ENCODE measurements at regions of chr11 and their contacts with region 1.

Region 1: GRCh38 chr11:62787005-62787759 is at the start of gene TMEM179B:
- DNase-seq: peak; percentile 93 to 100 (median 97)
- ATAC-seq: peak; percentile 70 to 78 (median 74)
- H3K4me3 ChIP-seq: peak within 1 kb of the TSS; percentile 85 to 96
- H3K4me3 Mint-ChIP-seq: peak within 1 kb of the TSS; percentile 91 to 93 (median 91)
- H3K27ac ChIP-seq: peak within 1 kb of the TSS; percentile 77
- H3K27ac Mint-ChIP-seq: peak within 1 kb of the TSS; percentile 95 to 96
- H3K4me1 ChIP-seq: peaks cover 15 to 48% of the 10 kb centered on the region in 2 experiments
- H3K4me1 Mint-ChIP-seq: peaks cover 37 to 49% (median 46%) of the 10 kb centered on the region in 3 donors
- H3K27me3 ChIP-seq: no peaks in the 10 kb centered on the region
- H3K27me3 Mint-ChIP-seq: no peaks in the 10 kb centered on the region
- total RNA-seq, gene TMEM179B: 27.7 to 53.3 (median 46.5) TPM

Region 2: GRCh38 chr11:62726915-62727763 is 60.0 kb before region 1 on chr11 and contains the start of gene HNRNPUL2:
- CTCF ChIA-PET with region 1: interaction called, 9 to 10 read pairs
- POLR2A ChIA-PET with region 1: interaction called in 1 of 2 experiments, 5 read pairs
- DNase-seq: peak; percentile 96 to 100 (median 98)
- ATAC-seq: peak; percentile 77 to 84 (median 82)
- H3K4me3 ChIP-seq: peak within 1 kb of the TSS; percentile 86 to 95
- H3K4me3 Mint-ChIP-seq: peak within 1 kb of the TSS; percentile 95 to 98 (median 98)
- H3K27ac ChIP-seq: peak within 1 kb of the TSS; percentile 94
- H3K27ac Mint-ChIP-seq: peak within 1 kb of the TSS; percentile 98 to 99
- H3K4me1 ChIP-seq: peaks cover 20 to 43% of the 10 kb centered on the region in 2 experiments
- H3K4me1 Mint-ChIP-seq: peaks cover 47 to 62% (median 58%) of the 10 kb centered on the region in 3 donors
- H3K27me3 ChIP-seq: no peaks in the 10 kb centered on the region
- H3K27me3 Mint-ChIP-seq: no peaks in the 10 kb centered on the region
- total RNA-seq, gene HNRNPUL2: 45.8 to 67.8 (median 62.7) TPM

Region 3: GRCh38 chr11:62771144-62772021 is 15.8 kb before region 1 on chr11 and contains the start of gene TAF6L:
- CTCF ChIA-PET with region 1: interaction called, 4 to 9 read pairs
- POLR2A ChIA-PET with region 1: interaction called, 5 to 11 read pairs
- DNase-seq: peak; percentile 71 to 91 (median 82)
- ATAC-seq: peak; percentile 85 to 89 (median 89)
- H3K4me3 ChIP-seq: peak within 1 kb of the TSS; percentile 67 to 82
- H3K4me3 Mint-ChIP-seq: peak within 1 kb of the TSS; percentile 88 to 94 (median 92)
- H3K27ac ChIP-seq: peak within 1 kb of the TSS; percentile 77
- H3K27ac Mint-ChIP-seq: peak within 1 kb of the TSS; percentile 94 to 95
- H3K4me1 ChIP-seq: peaks cover 8 to 26% of the 10 kb centered on the region in 2 experiments
- H3K4me1 Mint-ChIP-seq: peaks cover 21 to 28% (median 27%) of the 10 kb centered on the region in 3 donors
- H3K27me3 ChIP-seq: no peaks in the 10 kb centered on the region
- H3K27me3 Mint-ChIP-seq: no peaks in the 10 kb centered on the region
- total RNA-seq, gene TAF6L: 15.1 to 29.5 (median 29.0) TPM

Region 4: DNA sequence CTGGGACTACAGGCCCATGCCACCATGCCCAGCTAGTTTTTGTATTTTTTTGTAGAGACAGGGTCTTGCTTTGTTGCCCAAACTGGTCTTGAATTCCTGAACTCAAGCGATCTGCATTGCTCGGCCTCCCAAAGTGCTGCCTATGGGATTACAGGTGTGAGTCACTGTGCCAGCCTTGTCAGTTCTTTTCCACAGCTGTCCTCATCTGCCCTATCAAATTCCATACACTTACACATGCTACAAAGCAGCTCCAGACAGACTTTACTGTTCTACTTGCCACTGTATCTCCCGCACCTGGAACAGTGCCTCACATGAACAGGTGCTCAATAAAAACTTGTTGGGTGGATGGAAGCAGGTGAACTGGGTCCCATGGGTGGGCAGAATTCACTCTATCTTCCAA is 36.5 kb after region 1 on chr11:
- CTCF ChIA-PET with region 1: no interaction called
- POLR2A ChIA-PET with region 1: no interaction called
- DNase-seq: no peak
- ATAC-seq: no peak
- H3K4me3 ChIP-seq: no peak overlapping the region
- H3K4me3 Mint-ChIP-seq: no peak overlapping the region
- H3K27ac ChIP-seq: no peak overlapping the region
- H3K27ac Mint-ChIP-seq: no peak overlapping the region
- H3K4me1 ChIP-seq: peaks cover 0 to 5% of the 10 kb centered on the region in 2 experiments
- H3K4me1 Mint-ChIP-seq: peaks cover 0 to 22% (median 13%) of the 10 kb centered on the region in 3 donors
- H3K27me3 ChIP-seq: no peaks in the 10 kb centered on the region
- H3K27me3 Mint-ChIP-seq: no peaks in the 10 kb centered on the region

Region 5: GRCh38 chr11:62841361-62842184 is 54.4 kb after region 1 on chr11:
- CTCF ChIA-PET with region 1: interaction called in 1 of 2 experiments, 3 read pairs
- POLR2A ChIA-PET with region 1: interaction called in 1 of 2 experiments, 11 read pairs
- DNase-seq: peak; percentile 59 to 92 (median 83)
- ATAC-seq: peak; percentile 56 to 65 (median 60)
- H3K4me3 ChIP-seq: peak overlapping the region; percentile 54 to 91
- H3K4me3 Mint-ChIP-seq: no peak overlapping the region
- H3K27ac ChIP-seq: peak overlapping the region; percentile 100
- H3K27ac Mint-ChIP-seq: no peak overlapping the region
- H3K4me1 ChIP-seq: peaks cover 4 to 41% of the 10 kb centered on the region in 2 experiments
- H3K4me1 Mint-ChIP-seq: peaks cover 15 to 22% (median 19%) of the 10 kb centered on the region in 3 donors
- H3K27me3 ChIP-seq: no peaks in the 10 kb centered on the region
- H3K27me3 Mint-ChIP-seq: no peaks in the 10 kb centered on the region

Region 6: GRCh38 chr11:62860835-62861563 is 73.8 kb after region 1 on chr11:
- CTCF ChIA-PET with region 1: interaction called, 3 to 12 read pairs
- POLR2A ChIA-PET with region 1: interaction called, 5 to 23 read pairs
- DNase-seq: no peak
- ATAC-seq: no peak
- H3K4me3 ChIP-seq: no peak overlapping the region
- H3K4me3 Mint-ChIP-seq: no peak overlapping the region
- H3K27ac ChIP-seq: no peak overlapping the region
- H3K27ac Mint-ChIP-seq: no peak overlapping the region
- H3K4me1 ChIP-seq: peaks cover 5 to 18% of the 10 kb centered on the region in 2 experiments
- H3K4me1 Mint-ChIP-seq: peaks cover 15 to 27% (median 25%) of the 10 kb centered on the region in 3 donors
- H3K27me3 ChIP-seq: no peaks in the 10 kb centered on the region
- H3K27me3 Mint-ChIP-seq: no peaks in the 10 kb centered on the region

Measured in T-cell (primary cell).